ENCODE measurements at regions of chr18 and their contacts with region 1.

Region 1: DNA sequence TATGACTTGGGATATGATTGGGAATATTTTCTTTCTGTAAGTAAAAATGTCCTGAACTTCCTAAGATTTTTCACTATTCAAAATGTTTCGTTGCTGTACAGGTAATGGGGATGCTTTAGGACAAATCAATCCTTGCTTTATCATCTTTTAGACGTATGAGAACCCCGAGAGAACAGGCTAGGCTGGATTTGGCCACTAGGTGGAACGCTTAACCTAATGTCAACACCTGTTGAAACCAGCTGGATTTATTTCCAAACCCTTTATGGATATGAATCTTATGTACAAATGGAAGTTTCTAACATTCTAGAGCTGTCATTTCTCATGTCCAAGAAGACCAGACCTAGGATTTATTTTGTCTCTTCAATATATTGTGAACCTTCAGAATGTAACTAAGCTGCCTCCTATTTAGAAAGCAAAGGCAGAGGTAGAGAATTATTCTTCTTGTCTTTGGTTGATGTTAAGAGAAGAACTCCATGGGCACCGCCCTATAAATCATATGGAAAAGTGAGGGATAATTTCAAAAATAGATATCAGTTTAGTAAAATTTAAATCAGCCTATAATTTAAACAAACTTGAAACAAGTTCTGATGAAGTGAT is 96.7 kb downstream of the PMAIP1 start:
- DNase-seq: peak; percentile 23
- H3K4me3 ChIP-seq: no peak overlapping the region
- H3K27ac ChIP-seq: no peak overlapping the region
- H3K27me3 ChIP-seq: peaks cover 3% of the 10 kb centered on the region
- CTCF ChIP-seq: peak; percentile 91

Region 2: DNA sequence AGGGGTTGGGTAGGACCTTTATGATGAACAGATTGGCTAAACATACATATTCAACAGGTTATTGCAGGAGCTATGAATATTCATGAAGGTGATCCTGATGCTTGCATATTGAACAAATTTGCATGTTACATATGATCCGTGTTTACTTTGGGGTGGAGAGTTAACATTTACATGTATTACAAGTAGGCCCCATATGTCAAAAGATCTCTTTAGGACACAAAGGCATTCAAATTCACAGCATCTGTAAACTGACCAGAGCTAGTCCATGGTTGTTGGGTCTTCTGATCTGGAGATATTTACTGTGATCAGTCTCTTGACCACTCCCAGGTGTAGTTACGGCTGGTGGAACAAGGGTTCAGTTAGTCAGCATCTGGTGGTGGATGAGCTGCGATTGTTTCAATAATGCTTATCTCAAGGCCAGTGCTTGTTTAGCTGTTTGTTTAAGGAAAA is 16.3 kb before region 1 on chr18:
- CTCF ChIA-PET with region 1: interaction called, 33 read pairs
- POLR2A ChIA-PET with region 1: no interaction called
- DNase-seq: no peak
- H3K4me3 ChIP-seq: no peak overlapping the region
- H3K27ac ChIP-seq: no peak overlapping the region
- H3K27me3 ChIP-seq: no peaks in the 10 kb centered on the region
- CTCF ChIP-seq: no peak

Region 3: GRCh38 chr18:60019463-60019840 is 23.0 kb after region 1 on chr18:
- CTCF ChIA-PET with region 1: interaction called, 13 read pairs
- POLR2A ChIA-PET with region 1: no interaction called
- DNase-seq: peak; percentile 68
- H3K4me3 ChIP-seq: no peak overlapping the region
- H3K27ac ChIP-seq: peak overlapping the region; percentile 42
- H3K27me3 ChIP-seq: no peaks in the 10 kb centered on the region
- CTCF ChIP-seq: no peak

Region 4: GRCh38 chr18:60413944-60414547 is 417.6 kb after region 1 on chr18:
- CTCF ChIA-PET with region 1: interaction called, 39 read pairs
- POLR2A ChIA-PET with region 1: no interaction called
- DNase-seq: no peak
- H3K4me3 ChIP-seq: no peak overlapping the region
- H3K27ac ChIP-seq: no peak overlapping the region
- H3K27me3 ChIP-seq: no peaks in the 10 kb centered on the region
- CTCF ChIP-seq: peak; percentile 61

Region 5: GRCh38 chr18:60549338-60549960 is 553.0 kb after region 1 on chr18:
- CTCF ChIA-PET with region 1: interaction called, 108 read pairs
- POLR2A ChIA-PET with region 1: no interaction called
- DNase-seq: peak; percentile 51
- H3K4me3 ChIP-seq: no peak overlapping the region
- H3K27ac ChIP-seq: no peak overlapping the region
- H3K27me3 ChIP-seq: no peaks in the 10 kb centered on the region
- CTCF ChIP-seq: peak; percentile 86

Measured in AG04450 (cell line).